GM13976 (cell line): ENCODE measurements at regions of chr9 and their contacts with region 1.

Region 1: GRCh38 chr9:9603345-9603744 is 1009.5 kb downstream of the PTPRD start:
- DNase-seq: no peak
- CTCF ChIP-seq: no peak

Region 2: GRCh38 chr9:9747786-9748185 is 144.4 kb after region 1 on chr9:
- in situ Hi-C with region 1: no loop called
- DNase-seq: no peak
- CTCF ChIP-seq: no peak

Region 3: DNA sequence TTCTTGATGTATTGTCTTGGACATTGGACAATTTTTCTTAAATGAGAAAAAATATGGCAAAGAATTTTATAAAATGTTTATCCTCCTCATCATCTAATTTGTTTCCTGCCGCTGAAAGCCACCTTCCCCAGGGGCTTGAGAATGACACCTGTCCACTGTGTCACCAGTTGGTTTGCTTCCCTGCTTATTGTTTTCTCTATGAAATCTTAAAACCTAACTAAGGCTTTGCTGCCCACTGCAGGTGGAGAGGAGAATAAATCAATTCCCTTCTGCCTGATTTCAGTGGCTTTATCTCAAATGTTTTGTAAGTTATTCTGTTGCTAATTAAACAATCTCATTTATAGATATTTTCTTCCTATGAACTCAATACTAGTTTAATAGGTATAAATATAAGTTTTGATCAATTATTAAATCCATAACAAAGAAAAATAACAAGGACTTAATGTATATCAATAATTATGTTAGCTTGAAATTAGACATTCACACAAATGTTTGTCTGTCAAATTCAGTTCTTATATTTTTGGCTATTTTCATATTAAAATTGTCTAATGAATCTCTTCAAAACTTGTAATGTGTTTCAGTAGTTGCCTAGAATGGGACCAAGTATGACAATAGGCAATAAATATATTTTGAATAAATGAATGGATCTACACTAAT is 187.0 kb after region 1 on chr9:
- in situ Hi-C with region 1: loop called (anchors 10 kb)
- DNase-seq: peak; percentile 24
- CTCF ChIP-seq: peak; percentile 66